ENCODE measurements at regions of chr1 and their contacts with region 1.

Region 1: DNA sequence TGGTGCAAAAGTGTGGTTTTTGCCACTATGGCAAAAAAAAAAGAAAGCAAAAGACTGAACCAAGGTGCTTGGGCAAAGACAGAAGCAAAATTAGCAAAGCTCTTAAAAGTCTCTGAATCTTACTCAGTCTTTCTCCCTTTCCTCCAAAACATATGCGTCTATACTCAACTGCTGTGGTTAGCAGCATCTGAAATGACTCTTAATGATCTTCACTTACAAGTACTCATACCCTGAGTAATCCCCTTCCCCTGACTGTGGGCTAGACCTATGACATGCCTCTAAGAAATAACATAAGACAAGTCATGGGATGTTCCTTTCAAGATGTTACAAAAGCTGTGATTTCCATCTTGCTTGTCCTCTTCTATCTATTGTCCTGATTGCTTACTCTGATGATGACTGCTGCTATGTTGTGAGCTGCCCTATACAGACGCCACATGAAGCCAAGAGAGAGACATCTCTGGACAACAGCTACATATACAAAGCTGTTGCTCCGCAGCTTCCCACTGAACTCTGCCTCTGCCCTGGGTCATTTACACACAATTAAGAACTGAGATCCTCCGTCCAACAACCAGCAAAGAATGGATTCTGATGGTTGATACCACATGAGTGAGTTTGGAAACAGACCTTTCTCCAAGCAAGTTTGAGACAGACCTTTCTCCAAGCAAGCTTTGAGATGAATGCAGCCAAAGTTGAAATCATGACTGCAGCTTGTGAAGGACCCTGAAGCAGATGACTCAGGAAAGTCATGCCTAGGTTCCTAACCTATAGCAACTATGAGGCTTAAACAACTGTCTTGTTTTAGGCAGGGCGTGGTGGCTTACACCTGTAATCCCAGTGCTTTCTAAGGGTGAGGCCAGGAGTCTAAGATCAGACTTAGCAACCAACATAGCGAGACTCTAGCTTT is 55.2 kb downstream of the PUM1 start:
- DNase-seq: peak; percentile 35
- H3K4me3 ChIP-seq: no peak overlapping the region
- H3K27me3 ChIP-seq: no peaks in the 10 kb centered on the region
- CTCF ChIP-seq: no peak

Region 2: DNA sequence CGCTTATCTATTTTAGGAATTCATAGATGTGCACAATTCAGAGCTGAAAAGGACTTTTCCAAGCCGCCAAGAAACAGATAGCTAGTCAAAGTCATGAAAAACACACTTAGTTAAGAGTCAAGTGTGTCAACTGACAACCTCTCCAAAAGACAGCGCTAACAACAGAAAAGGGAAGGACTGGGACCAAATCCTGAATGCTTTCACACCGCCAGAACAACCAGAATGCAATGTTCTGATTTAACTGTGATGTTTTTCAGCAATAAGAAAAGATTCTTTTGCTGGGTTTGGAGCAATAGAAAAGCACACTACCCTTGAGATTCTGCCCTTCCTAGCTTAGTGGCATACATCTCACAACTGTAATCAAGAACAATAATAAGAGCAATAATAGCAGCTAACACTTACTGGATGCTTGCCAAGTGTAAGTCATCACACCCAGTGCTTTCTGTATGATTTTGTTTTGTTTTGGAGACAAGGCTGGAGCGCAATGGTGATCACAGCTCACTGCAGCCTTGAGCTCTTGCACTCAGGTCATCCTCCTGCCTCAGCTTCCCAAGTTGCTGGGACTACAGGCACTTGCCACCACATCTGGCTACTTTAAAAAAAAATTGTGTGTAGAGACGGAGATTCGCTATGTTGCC is 67.9 kb before region 1 on chr1:
- CTCF ChIA-PET with region 1: no interaction called
- POLR2A ChIA-PET with region 1: no interaction called
- DNase-seq: no peak
- H3K4me3 ChIP-seq: no peak overlapping the region
- H3K27me3 ChIP-seq: no peaks in the 10 kb centered on the region
- CTCF ChIP-seq: no peak

Region 3: GRCh38 chr1:31027693-31028526 is 17.6 kb after region 1 on chr1:
- CTCF ChIA-PET with region 1: interaction called, 11 read pairs
- POLR2A ChIA-PET with region 1: no interaction called
- DNase-seq: no peak
- H3K4me3 ChIP-seq: no peak overlapping the region
- H3K27me3 ChIP-seq: no peaks in the 10 kb centered on the region
- CTCF ChIP-seq: no peak

Region 4: DNA sequence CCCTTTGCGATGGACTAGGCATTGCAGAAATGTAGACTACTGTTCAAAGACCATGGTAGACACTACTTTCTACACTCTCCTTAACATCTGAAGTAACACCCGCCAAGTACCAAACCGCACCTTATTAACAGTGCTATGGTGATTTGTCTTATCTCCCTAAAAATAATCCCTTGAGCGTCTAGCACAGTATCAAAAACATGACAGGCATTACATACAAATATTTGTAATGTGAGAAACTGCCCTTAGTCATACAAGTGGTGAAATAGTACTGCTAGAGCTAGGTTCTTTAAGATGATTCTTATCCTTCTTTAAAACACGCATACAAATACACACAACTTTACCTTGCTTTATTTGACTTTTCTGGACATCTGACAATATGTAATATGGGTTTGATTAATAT is 28.0 kb after region 1 on chr1:
- CTCF ChIA-PET with region 1: no interaction called
- POLR2A ChIA-PET with region 1: interaction called, 25 read pairs
- DNase-seq: peak; percentile 26
- H3K4me3 ChIP-seq: no peak overlapping the region
- H3K27me3 ChIP-seq: no peaks in the 10 kb centered on the region
- CTCF ChIP-seq: no peak

Measured in BJ (cell line).